Activated naive CD8-positive, alpha-beta T cell treated with anti-CD3 and anti-CD28 coated beads, Interleukin-2, amount 10 ng/mL, durations not matched to agents 7 days and 5 days (primary cell): ENCODE measurements at regions of chr3 and their contacts with region 1.

Region 1: DNA sequence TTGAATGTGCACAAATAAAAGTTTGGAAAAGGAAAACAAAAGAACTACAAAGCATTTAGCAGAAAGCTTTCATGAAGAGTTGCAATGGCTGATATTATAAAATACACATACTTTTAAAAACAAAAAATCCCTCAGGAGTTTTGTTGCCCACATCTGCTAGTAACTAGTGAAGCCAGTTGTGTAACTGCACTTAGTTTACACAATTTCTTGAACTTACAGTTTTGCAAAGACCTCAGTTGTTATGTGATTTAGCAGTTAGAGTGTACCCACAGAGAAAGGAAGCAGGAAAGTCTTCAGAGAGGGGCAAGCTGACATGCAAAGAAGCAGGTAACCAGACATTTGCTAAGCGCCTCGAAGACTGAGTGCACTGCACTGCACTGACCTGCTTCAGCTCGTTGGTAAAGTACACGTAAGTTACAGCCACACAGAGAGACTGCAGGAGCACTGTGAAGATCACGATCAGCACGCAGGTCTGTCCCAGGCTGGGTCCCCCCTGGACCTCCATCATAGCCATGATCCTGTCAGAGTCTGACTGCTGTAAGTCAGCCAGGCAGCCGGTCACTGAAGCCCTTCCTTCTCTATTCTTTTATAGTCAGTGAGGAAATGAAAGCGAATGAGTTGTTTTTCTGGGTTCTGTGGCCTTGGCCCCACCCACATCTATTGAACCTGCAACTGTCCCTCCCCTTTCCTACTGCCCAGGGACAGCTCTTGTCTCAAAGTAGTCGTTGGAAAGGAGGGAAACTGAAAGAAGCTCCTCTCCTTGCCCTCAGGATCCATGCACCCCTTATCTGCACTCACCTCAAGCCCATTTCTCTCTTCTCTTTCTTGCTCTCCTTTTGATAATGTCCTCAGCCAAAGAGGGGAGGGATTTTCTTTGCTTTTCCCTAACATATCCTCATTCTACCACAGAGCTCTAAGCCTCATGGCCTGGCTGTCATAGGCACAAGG is at the start of gene TNFSF10:
- DNase-seq: peak; percentile 78
- ATAC-seq: peak; percentile 80
- H3K4me3 Mint-ChIP-seq: peak within 1 kb of the TSS; percentile 99
- H3K27ac Mint-ChIP-seq: peak within 1 kb of the TSS; percentile 94
- H3K4me1 Mint-ChIP-seq: peaks cover 35% of the 10 kb centered on the region
- H3K27me3 Mint-ChIP-seq: no peaks in the 10 kb centered on the region
- total RNA-seq, gene TNFSF10: 151 to 159 TPM

Region 2: GRCh38 chr3:172511783-172512762 is 11.1 kb before region 1 on chr3:
- POLR2A ChIA-PET with region 1: interaction called, 46 read pairs
- DNase-seq: peak; percentile 66
- ATAC-seq: peak; percentile 60
- H3K4me3 Mint-ChIP-seq: peak overlapping the region; percentile 80
- H3K27ac Mint-ChIP-seq: peak overlapping the region; percentile 87
- H3K4me1 Mint-ChIP-seq: peaks cover 81% of the 10 kb centered on the region
- H3K27me3 Mint-ChIP-seq: no peaks in the 10 kb centered on the region

Region 3: DNA sequence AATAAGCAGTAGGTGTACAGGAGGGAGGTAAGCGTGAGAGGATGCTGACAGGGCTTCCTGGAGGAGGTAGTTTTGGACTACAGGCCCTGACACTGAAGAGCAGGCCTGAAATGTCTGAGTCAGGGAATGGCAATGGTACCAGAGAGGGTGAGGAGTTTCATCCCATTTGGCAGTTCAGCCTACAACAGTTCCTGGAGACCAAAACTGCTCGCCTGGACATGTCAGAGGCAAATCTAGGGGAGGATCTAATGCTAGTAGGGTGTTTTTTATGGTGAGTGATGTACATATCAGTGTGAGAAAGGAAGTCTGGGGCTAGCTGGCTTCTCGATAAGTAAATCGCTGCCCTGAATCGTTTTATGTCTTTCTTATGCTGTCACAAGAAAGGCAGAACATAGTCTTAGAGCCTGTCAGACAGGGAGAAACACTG is 13.9 kb after region 1 on chr3:
- POLR2A ChIA-PET with region 1: interaction called, 65 read pairs
- DNase-seq: no peak
- ATAC-seq: peak; percentile 82
- H3K4me3 Mint-ChIP-seq: peak overlapping the region; percentile 37
- H3K27ac Mint-ChIP-seq: peak overlapping the region; percentile 95
- H3K4me1 Mint-ChIP-seq: peaks cover 60% of the 10 kb centered on the region
- H3K27me3 Mint-ChIP-seq: no peaks in the 10 kb centered on the region

Region 4: DNA sequence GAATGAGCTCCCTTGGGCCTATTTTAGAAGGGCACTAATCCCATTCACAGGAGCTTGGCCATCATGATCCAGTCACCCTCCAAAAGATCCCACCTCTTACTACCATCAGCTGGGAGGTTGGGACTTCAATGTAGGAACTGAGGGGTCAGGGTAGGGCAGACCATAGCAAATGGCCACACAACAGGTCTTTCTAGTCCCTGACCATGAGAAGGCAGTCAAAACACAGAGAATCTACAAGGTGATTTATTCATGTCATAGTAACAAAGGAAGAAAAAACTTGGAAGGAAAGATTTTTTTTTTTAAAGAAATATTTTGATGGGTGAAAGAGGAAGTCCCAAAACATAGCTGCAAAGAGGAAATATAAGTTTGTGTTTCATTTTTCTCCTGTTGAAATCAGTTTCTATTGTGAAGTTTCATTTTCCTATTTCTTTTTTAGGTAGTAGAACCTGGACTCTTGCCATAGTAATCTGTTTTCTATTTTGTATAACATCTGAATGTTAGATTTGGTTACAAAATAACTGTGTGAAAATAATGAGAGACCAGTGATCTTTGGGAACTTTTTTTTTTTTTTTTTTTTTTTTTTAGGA is 23.6 kb after region 1 on chr3:
- POLR2A ChIA-PET with region 1: interaction called, 14 read pairs
- DNase-seq: no peak
- ATAC-seq: no peak
- H3K4me3 Mint-ChIP-seq: peak overlapping the region; percentile 59
- H3K27ac Mint-ChIP-seq: peak overlapping the region; percentile 92
- H3K4me1 Mint-ChIP-seq: peaks cover 48% of the 10 kb centered on the region
- H3K27me3 Mint-ChIP-seq: no peaks in the 10 kb centered on the region

Region 5: DNA sequence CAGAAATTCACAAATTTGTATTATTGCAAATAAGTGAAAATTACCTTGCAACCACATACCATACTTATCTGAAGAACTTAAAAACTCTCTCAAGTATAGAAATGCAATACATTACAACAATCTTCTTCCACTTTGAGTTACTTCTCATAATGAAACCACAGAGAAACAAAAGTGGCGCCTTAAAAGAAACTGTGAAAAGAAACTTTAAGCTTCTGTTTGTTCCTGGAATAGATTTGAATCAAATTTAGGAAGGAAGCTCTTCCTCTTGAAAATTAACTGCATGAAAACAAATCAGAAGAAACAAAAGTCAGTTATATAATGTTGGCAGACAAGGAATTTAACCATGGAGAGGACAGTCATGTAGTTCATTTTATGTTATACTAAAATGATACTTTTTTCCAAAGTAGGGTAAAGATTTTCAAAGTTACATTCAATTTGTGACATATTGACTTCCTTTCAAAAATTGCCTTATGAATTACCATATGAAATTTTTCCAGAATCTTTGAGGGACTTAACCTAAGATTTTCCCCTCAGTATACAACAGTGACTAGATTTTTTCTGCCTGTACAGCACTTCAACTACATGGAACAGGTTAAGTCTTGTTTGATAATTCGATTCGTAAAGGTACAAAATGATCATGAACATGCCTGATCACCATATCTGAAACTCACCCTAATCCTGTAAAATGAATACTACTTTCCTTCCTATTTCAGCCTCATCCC is 57.7 kb after region 1 on chr3:
- POLR2A ChIA-PET with region 1: interaction called, 87 read pairs
- DNase-seq: no peak
- ATAC-seq: peak; percentile 10
- H3K4me3 Mint-ChIP-seq: peak overlapping the region; percentile 76
- H3K27ac Mint-ChIP-seq: peak overlapping the region; percentile 90
- H3K4me1 Mint-ChIP-seq: peaks cover 90% of the 10 kb centered on the region
- H3K27me3 Mint-ChIP-seq: no peaks in the 10 kb centered on the region

Region 6: DNA sequence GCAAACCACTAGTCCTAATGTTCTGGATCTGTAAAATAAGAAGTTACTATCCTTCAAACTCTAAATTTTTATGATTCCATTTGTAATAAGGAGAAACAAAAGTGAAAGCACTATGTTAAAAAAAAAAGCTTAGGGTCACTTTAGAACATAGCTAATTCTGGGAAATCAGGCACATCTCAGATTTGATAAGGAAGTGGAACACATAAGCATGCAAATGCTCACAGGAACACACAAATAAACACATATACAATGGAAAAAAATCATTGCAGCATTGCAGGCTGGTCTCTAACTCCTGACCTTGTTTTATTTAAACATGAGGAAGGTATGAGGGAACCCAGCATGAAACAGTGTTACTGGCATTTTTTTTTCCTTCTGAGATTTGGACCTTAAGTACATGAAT is 63.3 kb after region 1 on chr3:
- POLR2A ChIA-PET with region 1: interaction called, 214 read pairs
- DNase-seq: no peak
- ATAC-seq: peak; percentile 44
- H3K4me3 Mint-ChIP-seq: peak overlapping the region; percentile 29
- H3K27ac Mint-ChIP-seq: peak overlapping the region; percentile 70
- H3K4me1 Mint-ChIP-seq: peaks cover 83% of the 10 kb centered on the region
- H3K27me3 Mint-ChIP-seq: no peaks in the 10 kb centered on the region

Region 7: GRCh38 chr3:172595641-172596393 is 72.7 kb after region 1 on chr3:
- POLR2A ChIA-PET with region 1: interaction called, 214 read pairs
- DNase-seq: no peak
- ATAC-seq: no peak
- H3K4me3 Mint-ChIP-seq: peak overlapping the region; percentile 81
- H3K27ac Mint-ChIP-seq: peak overlapping the region; percentile 84
- H3K4me1 Mint-ChIP-seq: peaks cover 54% of the 10 kb centered on the region
- H3K27me3 Mint-ChIP-seq: no peaks in the 10 kb centered on the region